HEK293T (cell line): ENCODE measurements at regions of chr4 and their contacts with region 1.

Region 1: DNA sequence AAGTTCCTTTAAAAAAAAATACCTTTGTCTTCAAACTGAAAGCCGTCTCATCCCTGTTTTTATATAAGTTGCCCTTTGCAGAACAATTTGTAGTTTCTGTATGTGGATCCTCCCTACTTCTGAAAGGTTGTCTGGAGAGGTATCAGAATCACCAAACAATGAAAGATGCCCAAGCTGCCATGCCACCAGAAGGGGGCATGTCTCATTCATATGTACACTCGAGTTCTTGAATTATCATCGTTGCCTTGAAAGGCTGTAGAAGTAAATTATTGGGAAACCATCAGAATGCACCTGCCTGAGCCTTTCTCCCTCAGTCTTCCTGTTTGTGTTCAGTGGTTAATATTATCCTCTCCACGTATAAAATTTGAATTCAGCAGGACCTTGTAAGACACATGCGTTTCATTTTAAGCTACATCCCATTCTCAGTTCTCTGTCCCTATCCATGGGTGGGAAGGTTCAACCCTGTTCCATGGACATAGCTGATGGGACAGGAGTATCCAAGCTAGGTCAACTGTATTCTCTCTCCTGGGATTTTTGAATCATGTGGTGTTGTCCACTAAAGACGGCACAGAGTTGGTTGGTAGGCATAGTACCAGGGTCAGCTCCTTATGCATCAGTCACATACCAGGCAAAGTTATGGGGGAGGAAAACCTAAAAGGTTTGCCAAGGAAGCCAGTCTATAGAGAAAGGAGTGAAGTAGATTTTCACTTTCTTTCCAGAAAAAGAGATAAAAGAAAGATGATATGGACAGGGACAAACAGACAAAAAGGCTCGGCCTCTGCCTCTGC is 24.0 kb downstream of the GALNT7 start:
- DNase-seq: no peak

Region 2: DNA sequence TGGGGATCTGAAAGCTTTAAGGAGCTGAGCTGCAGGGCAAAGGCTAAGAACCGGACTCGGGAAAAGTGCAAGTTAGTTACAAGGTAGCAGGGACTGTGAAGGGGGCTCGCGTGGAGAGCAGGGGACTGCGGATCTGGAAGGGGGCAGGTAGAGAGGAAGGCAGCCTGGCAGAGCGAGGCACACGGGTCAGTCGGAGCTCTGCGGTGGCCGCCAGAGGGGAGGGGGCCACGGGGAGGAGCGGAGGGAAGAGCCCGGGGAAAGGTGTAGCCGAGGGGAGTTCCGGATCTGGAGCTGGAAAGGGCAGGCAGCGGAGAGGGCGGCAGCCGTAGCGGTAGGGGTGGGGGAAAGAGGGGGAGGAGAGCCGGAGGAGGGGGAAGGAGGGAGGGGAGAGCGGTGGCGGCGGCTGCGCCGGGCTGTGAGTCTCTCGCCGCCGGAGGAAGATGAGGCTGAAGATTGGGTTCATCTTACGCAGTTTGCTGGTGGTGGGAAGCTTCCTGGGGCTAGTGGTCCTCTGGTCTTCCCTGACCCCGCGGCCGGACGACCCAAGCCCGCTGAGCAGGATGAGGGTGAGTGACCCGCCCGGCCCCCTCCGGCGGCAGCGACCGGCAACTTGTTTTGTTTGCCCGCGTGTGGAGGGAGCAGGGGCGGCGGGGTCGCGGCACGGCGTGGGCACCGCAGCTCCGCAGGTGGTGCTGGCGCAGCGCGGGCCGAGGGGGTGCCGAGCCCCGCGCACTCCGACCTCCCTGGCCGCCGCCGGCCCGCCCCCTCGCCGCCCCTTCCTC is 24.0 kb before region 1 on chr4 and contains the start of gene GALNT7:
- CTCF ChIA-PET with region 1: interaction called, 4 read pairs
- POLR2A ChIA-PET with region 1: interaction called, 11 read pairs
- DNase-seq: peak; percentile 84

Region 3: GRCh38 chr4:173243917-173244658 is 51.5 kb after region 1 on chr4:
- CTCF ChIA-PET with region 1: no interaction called
- POLR2A ChIA-PET with region 1: no interaction called
- DNase-seq: no peak